Activated naive CD8-positive, alpha-beta T cell treated with anti-CD3 and anti-CD28 coated beads, Interleukin-2, amount 10 ng/mL, durations not matched to agents 7 days and 5 days (primary cell): ENCODE measurements at regions of chr1 and their contacts with region 1.

Region 1: DNA sequence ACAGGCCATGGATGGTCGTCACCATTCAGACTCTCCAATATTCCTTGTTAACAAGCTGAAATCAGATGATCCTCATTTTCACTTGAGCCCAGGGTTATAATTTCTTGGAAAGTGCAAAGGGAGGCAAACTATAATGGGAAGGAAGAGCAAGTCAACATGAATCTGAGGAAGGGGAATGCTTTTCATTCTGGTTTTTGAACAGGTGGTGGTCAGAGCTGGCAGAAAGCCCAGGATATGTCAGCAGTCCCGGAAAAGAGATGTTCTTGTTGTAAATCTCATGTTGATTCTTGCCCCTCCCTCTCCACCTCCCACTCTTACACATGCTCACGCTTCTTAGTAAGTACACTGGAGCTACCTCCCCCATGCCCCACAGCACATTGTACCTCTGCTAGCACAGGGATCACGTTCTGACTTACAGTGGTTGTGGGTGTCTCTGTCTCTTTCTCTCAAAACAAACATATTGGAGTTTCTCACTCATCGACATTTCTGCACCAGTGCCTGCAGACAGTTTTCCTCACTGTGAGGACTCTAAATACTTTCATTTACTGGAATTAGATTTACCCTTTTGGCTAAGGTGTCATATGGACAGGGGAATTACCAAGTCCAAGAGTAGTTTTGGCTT is 77.6 kb downstream of the XCL2 start:
- DNase-seq: no peak
- ATAC-seq: peak; percentile 88
- H3K4me3 Mint-ChIP-seq: peak overlapping the region; percentile 66
- H3K27ac Mint-ChIP-seq: peak overlapping the region; percentile 93
- H3K4me1 Mint-ChIP-seq: peaks cover 68% of the 10 kb centered on the region
- H3K27me3 Mint-ChIP-seq: no peaks in the 10 kb centered on the region

Region 2: GRCh38 chr1:168301664-168302334 is 164.4 kb before region 1 on chr1:
- POLR2A ChIA-PET with region 1: no interaction called
- DNase-seq: no peak
- ATAC-seq: no peak
- H3K4me3 Mint-ChIP-seq: no peak overlapping the region
- H3K27ac Mint-ChIP-seq: no peak overlapping the region
- H3K4me1 Mint-ChIP-seq: no peaks in the 10 kb centered on the region
- H3K27me3 Mint-ChIP-seq: no peaks in the 10 kb centered on the region

Region 3: DNA sequence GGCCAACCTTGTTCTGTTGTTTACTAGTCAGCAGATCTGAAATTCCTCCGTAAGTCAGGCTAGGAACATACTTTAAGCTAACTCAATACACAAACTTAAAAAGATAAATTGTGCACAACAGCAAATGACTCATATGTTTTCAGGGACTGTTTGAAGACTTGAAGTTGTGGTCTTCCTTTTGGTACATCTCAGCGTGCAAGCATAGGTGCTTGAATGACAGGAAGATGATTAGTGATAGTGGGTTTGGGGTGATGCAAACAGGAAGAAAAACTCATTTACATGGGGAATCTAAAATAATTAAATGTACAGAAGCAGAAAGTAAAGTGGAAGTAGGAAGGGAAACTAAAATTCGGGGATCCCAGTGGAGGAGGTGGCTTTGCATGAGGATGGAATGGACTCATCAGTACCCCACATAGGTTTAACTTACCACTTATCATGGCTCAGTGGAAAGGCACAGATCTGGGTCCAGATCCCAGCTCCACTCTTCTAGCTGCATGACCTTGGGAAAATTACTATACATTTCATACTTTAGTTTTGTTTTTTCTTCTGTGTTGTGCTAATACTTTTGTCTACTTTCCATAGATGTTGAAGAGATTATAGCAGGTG is 44.7 kb before region 1 on chr1:
- POLR2A ChIA-PET with region 1: no interaction called
- DNase-seq: no peak
- ATAC-seq: peak; percentile 94
- H3K4me3 Mint-ChIP-seq: peak overlapping the region; percentile 47
- H3K27ac Mint-ChIP-seq: peak overlapping the region; percentile 85
- H3K4me1 Mint-ChIP-seq: peaks cover 14% of the 10 kb centered on the region
- H3K27me3 Mint-ChIP-seq: no peaks in the 10 kb centered on the region

Region 4: DNA sequence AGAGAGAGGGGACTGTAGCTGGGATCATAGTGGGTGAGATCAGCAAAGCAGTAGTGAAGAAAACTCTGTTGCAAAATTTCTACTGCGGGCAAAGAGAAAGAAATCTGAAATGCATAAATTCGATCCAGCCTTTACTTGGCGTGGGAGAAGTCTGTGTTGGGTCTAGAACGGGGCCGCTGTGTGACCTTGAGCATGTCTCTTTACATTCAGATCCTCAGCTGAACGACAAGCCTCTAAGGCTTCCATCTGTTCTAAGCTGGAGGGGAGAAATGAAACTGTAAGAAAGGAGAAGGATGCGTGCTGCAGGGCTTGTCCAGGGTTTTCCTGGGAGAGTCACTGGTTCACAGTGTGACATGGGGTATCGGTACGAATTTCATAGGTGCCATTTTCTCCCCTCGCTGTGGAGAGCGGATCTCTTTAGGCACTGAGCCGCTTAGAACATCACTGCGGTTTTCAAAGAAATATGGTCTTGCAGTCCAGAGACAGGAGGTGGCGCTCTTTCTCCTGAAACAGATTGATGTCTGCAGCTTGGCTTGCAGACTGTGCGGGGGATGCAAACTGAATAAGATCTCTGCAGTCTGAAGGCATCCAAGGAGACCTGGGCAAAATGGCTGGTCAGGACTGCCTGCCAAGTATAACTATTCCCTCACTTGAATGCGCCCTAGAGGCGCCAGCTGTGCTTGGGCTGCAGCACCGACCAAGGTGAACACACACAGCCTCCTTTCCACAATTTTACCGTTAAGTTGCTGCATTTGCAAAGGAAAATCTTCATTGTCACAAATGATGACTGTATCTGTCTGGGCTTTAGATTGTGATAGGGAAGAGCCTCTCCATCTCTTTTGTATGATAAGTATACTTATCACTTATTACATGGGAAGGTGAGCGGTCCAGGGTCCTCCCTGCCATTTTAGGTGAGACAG is 26.5 kb before region 1 on chr1:
- POLR2A ChIA-PET with region 1: interaction called, 104 read pairs
- DNase-seq: peak; percentile 75
- ATAC-seq: peak; percentile 80
- H3K4me3 Mint-ChIP-seq: peak overlapping the region; percentile 74
- H3K27ac Mint-ChIP-seq: peak overlapping the region; percentile 85
- H3K4me1 Mint-ChIP-seq: peaks cover 56% of the 10 kb centered on the region
- H3K27me3 Mint-ChIP-seq: no peaks in the 10 kb centered on the region